Head of caudate nucleus (tissue), 42 donors: ENCODE measurements at regions of chr6 and their contacts with region 1.

Region 1: DNA sequence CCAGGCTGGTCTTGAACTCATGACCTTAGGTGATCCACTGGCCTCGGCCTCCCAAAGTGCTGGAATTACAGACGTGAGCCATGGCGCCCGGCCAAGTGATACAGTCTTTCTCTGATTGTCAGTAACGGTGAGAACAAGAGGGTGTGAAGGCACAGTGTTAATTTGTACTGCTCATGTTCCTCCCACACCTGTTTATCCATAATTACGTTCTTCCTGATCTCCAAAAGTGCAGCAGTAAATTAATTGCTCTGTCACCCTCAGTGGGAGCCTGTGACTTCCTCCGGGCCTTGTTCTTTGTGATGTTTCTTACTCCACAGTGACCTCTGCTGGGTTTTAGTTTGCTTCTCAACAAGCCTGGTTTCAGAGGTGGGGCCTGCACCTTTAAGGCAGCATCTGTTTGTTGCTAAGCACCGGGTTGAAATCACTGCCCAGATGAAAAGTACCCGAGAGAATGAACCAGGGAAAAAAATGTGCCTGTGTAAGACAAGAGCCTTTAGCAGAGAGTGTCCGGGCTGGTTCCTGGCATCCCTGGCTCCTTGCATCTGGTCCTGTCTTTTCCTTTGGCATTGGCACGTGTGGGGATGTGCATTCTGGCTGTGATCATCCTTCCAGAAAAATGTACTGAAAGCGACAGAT is 89.1 kb upstream of the CLDN20 start:
- DNase-seq: peak; percentile 19 to 88 (median 66)

Region 2: GRCh38 chr6:154868143-154868594 is 306.5 kb before region 1 on chr6:
- intact Hi-C with region 1: loop called (anchors 10 kb)
- DNase-seq: peak in 11 of 42 donors; percentile 16 to 65 (median 36)

Region 3: DNA sequence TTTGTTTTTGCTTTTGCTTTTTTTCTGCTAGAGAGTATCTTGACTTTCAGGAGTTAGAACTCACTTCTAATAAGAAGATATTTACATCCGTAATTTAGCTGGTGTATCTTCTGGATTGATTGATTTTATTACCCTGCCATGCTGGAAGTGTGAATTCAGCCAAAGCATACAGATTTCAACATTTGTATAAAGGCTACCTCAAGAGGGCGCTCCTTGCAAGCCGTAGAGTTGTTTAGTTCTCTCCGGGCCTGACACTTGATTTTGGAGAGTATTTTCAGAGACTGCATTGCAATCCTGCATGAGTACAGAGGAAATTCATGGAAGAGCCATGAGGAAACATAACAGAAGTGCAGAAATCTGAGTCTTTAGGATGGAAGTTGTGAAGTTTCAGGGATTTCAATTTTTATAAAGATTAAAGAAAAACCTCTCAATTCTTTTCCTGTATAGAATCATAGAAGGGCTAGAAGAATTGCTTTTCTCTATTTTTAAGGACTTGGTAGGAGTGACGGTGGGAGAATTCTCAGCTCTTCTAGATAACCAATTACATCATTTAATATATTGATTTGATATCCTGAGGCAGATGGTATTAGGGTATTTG is 246.3 kb before region 1 on chr6:
- intact Hi-C with region 1: loop called (anchors 5 kb)
- DNase-seq: peak in 39 of 42 donors; percentile 19 to 88 (median 69)

Region 4: DNA sequence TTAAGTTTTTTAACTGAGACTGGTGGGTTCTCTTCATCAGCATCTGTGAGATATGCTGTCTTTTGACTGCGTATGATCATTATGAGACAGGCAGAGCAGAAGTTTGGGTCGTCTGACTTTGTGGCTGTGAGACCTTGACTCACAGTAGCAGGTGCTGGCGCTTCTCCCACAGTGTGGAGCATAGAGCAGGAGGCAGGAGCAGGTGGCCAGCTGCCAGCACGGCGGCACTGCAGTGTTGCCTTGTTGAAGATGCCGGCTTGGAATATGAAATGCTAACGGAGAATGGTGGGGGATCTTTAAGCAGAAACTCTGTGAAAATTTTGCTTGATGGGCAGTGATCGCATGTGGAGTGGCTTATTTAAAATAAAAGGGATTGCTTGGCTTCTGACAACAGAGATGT is 74.6 kb before region 1 on chr6:
- intact Hi-C with region 1: no loop called
- DNase-seq: peak in 12 of 42 donors; percentile 7 to 48 (median 19)

Region 5: DNA sequence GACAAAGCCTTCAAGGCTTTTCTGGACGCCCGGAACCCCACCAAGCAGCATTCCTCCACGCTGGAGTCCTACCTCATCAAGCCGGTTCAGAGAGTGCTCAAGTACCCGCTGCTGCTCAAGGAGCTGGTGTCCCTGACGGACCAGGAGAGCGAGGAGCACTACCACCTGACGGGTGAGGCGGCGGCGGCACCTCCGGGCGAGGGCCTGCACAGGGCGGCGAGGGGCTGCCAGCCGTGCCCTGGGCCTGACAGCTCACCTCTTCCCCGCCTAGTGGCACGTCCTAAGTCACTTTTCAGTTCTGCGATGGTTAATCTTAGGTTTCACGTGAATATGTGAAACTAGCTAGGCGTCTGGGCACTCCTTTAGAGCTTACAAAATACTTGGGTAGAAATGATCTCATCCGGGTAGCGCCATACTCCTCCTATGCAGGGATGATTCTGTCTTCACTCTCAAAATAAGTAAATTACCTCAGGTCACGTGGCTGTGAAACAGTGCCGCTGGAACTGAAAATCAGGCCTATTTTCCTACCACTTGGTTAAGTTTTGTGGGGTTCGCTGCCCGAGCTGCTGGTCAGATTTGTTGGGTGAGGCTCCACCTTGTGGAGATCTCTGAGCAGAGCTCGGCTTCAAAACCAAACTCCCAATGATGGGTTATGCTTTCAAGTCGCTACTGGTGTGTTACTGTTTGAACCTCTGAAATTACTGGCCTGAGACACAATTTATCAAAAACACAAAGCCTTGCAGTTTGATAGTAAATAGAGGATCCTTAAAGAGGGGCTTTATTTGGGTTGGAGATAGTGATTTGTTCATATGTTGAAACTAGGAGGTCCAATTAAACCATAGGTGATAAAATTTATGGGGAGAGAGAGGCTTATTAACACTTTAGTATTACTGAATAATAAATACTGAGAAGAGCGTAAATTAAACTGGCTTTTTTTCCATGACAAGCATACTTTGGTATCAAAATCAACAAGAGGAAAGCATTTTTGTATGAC is 73.6 kb after region 1 on chr6:
- intact Hi-C with region 1: loop called (anchors 5 kb)
- DNase-seq: peak; percentile 48 to 85 (median 72)

Region 6: GRCh38 chr6:155314092-155314772 is 139.5 kb after region 1 on chr6 and contains the start of gene TFB1M:
- intact Hi-C with region 1: loop called (anchors 10 kb)
- DNase-seq: peak; percentile 95 to 100 (median 98)